PC-3 (cell line): ENCODE measurements at regions of chr6 and their contacts with region 1.

Region 1: GRCh38 chr6:18405477-18406293 is 18.5 kb downstream of the RNF144B start:
- DNase-seq: peak; percentile 96
- ATAC-seq: peak; percentile 98
- H3K4me3 ChIP-seq: peak overlapping the region; percentile 31; the same call in 1 of the 2 replicates
- H3K27ac ChIP-seq: peak overlapping the region; percentile 97
- H3K4me1 ChIP-seq: peaks cover 30% of the 10 kb centered on the region
- H3K27me3 ChIP-seq: no peaks in the 10 kb centered on the region
- CTCF ChIP-seq: no peak

Region 2: DNA sequence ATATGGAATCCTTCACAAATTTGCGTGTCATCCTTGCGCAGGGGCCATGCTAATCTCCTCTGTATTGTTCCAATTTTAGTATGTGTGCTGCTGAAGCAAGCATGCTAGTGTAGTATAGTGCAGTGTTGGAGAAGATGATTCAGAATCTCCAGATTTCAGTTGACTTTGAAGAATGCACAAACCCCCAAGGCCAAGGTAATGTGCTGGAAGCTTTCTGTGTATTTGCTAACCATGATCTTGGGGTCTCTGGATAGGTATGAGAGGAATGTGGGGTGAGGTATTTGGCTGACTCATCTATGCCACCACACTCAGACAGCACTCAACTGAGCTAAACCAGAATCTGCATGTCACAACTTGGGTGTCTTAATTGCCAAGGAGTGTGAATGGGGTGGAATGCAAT is 98.7 kb before region 1 on chr6:
- CTCF ChIA-PET with region 1: no interaction called
- POLR2A ChIA-PET with region 1: no interaction called
- intact Hi-C with region 1: no loop called
- DNase-seq: no peak
- ATAC-seq: peak; percentile 12; the same call in 1 of the 2 replicates
- H3K4me3 ChIP-seq: no peak overlapping the region
- H3K27ac ChIP-seq: no peak overlapping the region
- H3K4me1 ChIP-seq: no peaks in the 10 kb centered on the region
- H3K27me3 ChIP-seq: no peaks in the 10 kb centered on the region
- CTCF ChIP-seq: no peak

Region 3: DNA sequence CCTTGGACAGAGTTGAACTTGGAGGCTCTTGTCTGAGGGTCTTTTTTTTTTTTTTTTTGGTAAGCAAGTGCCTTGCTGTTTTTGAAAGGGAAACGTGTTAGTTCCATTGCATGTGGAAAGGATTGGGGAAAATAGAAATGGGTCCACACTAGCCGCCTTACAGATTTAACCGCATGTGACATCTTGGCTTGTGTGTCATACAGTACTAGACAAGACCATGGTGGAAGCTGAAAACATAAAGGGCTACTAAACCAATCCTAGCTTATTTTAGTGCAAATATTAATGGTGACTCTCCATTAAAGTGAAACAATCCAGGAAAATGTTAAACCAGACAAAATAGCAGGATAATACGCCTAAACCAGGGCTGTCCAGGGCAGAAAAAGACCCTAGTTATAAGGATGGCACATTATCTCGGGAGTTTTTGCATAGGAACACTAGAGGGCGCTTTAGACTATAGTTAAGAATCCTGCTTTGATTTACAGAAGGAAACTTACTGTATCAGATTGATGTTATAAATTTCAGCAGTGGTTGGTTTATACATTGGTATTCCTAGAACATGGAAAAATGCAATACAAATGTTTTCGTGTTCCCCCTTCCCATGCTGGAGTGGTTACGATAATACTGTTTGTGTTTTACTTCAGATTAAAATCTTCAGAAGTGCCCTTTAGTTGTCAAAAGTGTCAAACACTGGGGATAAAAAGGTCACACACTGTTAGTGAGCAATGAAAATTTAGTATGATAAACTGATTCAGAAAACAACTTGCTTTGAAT is 81.6 kb before region 1 on chr6:
- CTCF ChIA-PET with region 1: no interaction called
- POLR2A ChIA-PET with region 1: no interaction called
- intact Hi-C with region 1: loop called (anchors 1 kb)
- DNase-seq: peak; percentile 78
- ATAC-seq: peak; percentile 72
- H3K4me3 ChIP-seq: no peak overlapping the region
- H3K27ac ChIP-seq: no peak overlapping the region
- H3K4me1 ChIP-seq: peaks cover 11% of the 10 kb centered on the region
- H3K27me3 ChIP-seq: no peaks in the 10 kb centered on the region
- CTCF ChIP-seq: peak; percentile 86

Region 4: GRCh38 chr6:18362058-18362561 is 43.6 kb before region 1 on chr6:
- CTCF ChIA-PET with region 1: no interaction called
- POLR2A ChIA-PET with region 1: no interaction called
- intact Hi-C with region 1: no loop called
- DNase-seq: peak; percentile 48
- ATAC-seq: peak; percentile 85
- H3K4me3 ChIP-seq: no peak overlapping the region
- H3K27ac ChIP-seq: 0 out of 2 replicates have a peak overlapping the region, but pooled peaks have one; percentile 13
- H3K4me1 ChIP-seq: peaks cover 5% of the 10 kb centered on the region; the same call in 1 of the 2 replicates
- H3K27me3 ChIP-seq: no peaks in the 10 kb centered on the region
- CTCF ChIP-seq: no peak

Region 5: DNA sequence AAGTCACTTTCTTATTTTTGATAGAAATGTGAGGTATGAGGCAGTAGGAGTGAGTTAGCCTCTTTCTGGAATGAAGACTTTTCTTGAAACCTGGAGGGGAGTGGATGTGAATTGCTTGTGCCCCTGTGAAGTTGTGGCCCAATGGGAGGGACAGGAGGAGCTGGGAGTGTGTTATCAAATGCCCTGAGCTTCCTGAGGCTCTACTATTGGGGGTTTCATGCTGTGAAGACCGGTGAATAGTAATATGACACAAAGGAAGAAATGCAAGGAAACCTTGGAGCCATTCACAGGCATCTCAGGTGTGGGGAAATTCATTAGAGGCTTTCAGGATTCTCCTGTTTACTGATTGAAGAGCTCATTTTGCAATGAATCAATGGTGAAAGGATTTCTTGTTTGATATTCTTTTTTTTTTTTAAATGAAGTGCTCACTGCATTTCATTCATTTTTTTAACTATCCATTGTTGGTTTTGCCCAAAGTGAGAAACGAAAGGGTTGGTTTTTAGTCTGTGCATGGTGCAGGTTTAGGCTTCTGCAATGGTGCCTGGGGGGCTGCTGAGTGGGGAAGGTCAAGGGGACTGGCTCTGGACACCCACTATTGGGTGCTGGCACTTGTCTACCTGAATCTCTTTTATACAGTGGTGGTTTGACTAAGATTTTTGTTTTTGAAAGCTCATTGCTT is 10.4 kb before region 1 on chr6:
- CTCF ChIA-PET with region 1: no interaction called
- POLR2A ChIA-PET with region 1: no interaction called
- intact Hi-C with region 1: no loop called
- DNase-seq: no peak
- ATAC-seq: no peak
- H3K4me3 ChIP-seq: no peak overlapping the region
- H3K27ac ChIP-seq: no peak overlapping the region
- H3K4me1 ChIP-seq: peaks cover 17% of the 10 kb centered on the region; the same call in 1 of the 2 replicates
- H3K27me3 ChIP-seq: no peaks in the 10 kb centered on the region
- CTCF ChIP-seq: no peak

Region 6: DNA sequence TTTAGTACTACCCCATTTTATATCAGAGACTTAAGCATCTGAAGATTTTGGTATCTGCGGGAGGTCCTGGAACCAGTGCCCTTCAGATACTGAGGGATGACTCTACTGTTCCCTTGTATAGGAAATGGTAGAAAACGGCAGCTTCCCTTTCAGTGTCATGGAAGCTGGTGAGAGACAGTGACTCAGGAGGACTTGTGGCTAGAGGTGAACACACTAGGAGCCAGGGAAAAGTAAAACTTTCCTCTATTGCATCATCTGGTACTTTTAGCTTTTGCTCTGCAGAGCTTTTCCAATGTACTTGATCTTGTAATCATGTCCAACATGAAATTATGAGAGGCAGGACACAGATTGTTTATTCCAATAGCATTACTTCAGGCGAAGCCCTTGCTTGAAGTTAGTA is 26.5 kb after region 1 on chr6:
- CTCF ChIA-PET with region 1: no interaction called
- POLR2A ChIA-PET with region 1: no interaction called
- intact Hi-C with region 1: loop called (anchors 1 kb)
- DNase-seq: peak; percentile 12
- ATAC-seq: no peak
- H3K4me3 ChIP-seq: no peak overlapping the region
- H3K27ac ChIP-seq: no peak overlapping the region
- H3K4me1 ChIP-seq: peaks cover 16% of the 10 kb centered on the region
- H3K27me3 ChIP-seq: no peaks in the 10 kb centered on the region
- CTCF ChIP-seq: no peak

Region 7: GRCh38 chr6:18493382-18493891 is 87.8 kb after region 1 on chr6:
- CTCF ChIA-PET with region 1: no interaction called
- POLR2A ChIA-PET with region 1: no interaction called
- intact Hi-C with region 1: loop called (anchors 1 kb)
- DNase-seq: peak; percentile 68
- ATAC-seq: peak; percentile 92
- H3K4me3 ChIP-seq: no peak overlapping the region
- H3K27ac ChIP-seq: peak overlapping the region; percentile 30
- H3K4me1 ChIP-seq: peaks cover 20% of the 10 kb centered on the region
- H3K27me3 ChIP-seq: no peaks in the 10 kb centered on the region
- CTCF ChIP-seq: no peak

Region 8: DNA sequence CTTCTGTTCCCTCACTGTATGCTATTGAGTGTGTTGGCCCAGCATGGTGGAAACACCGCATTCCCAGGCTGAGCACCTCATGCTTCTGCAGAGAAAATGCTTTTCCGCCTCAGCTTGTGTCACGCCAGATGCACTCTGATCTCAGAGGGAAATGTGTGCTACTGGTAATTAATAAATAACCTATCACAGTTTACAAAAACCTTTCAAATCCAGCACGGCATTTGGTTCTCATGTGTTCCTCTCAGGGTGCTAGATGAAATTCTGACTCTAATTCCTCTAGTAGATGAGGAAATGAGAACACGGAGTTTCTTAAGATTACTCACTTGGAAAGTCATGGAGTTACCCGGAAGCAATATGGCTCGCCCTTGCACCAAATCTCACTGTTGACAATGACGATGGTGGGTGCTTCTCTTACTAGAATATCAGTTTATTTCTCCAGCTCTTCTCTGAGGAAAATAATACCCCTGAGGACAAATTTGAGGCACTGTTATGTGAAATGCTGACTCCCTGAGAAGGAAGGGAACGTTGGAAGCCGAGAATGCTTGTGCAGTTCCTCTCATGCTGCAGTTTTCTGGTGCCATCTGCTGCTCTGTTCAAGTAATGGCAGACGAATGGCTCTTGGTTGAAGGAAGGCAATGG is 98.0 kb after region 1 on chr6:
- CTCF ChIA-PET with region 1: no interaction called
- POLR2A ChIA-PET with region 1: no interaction called
- intact Hi-C with region 1: loop called (anchors 1 kb)
- DNase-seq: peak; percentile 81
- ATAC-seq: peak; percentile 92
- H3K4me3 ChIP-seq: peak overlapping the region; percentile 58
- H3K27ac ChIP-seq: peak overlapping the region; percentile 9; the same call in 1 of the 2 replicates
- H3K4me1 ChIP-seq: peaks cover 6% of the 10 kb centered on the region; the same call in 1 of the 2 replicates
- H3K27me3 ChIP-seq: no peaks in the 10 kb centered on the region
- CTCF ChIP-seq: peak; percentile 98

Region 9: GRCh38 chr6:18515767-18516166 is 110.1 kb after region 1 on chr6:
- CTCF ChIA-PET with region 1: no interaction called
- POLR2A ChIA-PET with region 1: no interaction called
- intact Hi-C with region 1: no loop called
- DNase-seq: peak; percentile 41
- ATAC-seq: peak; percentile 72
- H3K4me3 ChIP-seq: no peak overlapping the region
- H3K27ac ChIP-seq: no peak overlapping the region
- H3K4me1 ChIP-seq: peaks cover 8% of the 10 kb centered on the region; the same call in 1 of the 2 replicates
- H3K27me3 ChIP-seq: no peaks in the 10 kb centered on the region
- CTCF ChIP-seq: no peak